ENCODE measurements at regions of chr9 and their contacts with region 1.

Region 1: GRCh38 chr9:21965401-21965951 is 28.7 kb downstream of the CDKN2A start:
- DNase-seq: peak; percentile 68
- H3K4me3 ChIP-seq: peak overlapping the region; percentile 34 to 46 (median 40)
- H3K27ac ChIP-seq: no peak overlapping the region
- H3K4me1 ChIP-seq: peaks cover 28% of the 10 kb centered on the region
- H3K27me3 ChIP-seq: peaks cover 57 to 84% of the 10 kb centered on the region in 2 experiments
- CTCF ChIP-seq: peak; percentile 75 to 80
- POLR2A ChIP-seq: no peak

Region 2: DNA sequence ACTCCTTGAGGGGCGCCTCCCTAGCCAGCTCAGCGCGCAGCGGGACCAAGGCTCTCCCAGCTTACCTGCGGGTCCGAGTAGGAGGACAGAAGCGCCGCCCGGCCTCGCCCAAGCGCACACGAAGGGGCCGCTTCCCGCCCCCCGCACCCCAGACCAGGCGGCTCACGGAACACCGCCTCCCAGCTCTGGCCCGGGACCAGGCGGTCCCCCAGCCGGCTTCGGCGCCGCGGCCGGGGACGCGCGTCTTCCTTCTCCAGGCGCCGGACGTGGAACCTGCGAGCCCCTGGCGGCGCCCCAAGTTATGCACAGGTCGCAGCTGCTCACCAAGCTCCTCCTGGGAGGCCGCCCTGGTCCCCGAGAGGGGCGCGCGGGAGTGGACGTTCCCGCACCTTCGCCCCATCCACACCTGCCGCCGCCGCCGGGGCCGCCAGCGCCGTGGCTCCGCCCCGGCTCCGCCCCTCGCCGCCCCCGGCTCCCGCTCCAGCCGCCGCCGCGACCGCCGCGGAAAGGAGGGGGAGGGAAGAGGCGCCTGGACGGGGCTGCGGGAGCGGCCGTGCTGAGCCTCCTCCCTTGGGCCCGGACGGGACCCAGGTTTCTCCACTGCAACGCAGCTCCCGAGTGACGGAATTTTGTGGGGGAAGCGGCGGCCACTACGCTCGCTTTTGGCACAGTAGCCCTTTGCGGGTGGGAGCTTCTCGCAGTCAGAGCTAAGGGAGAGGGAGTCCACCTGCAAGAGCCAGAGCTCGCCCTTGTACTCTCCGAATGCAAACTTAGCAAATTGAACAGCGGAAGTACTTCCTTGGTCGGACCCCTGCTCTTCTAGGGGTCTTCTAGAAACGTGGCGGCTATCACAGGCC is 405.8 kb before region 1 on chr9:
- CTCF ChIA-PET with region 1: no interaction called
- POLR2A ChIA-PET with region 1: no interaction called
- dilution Hi-C with region 1: no loop called
- intact Hi-C with region 1: no loop called
- DNase-seq: peak; percentile 68
- H3K4me3 ChIP-seq: peak overlapping the region; percentile 78 to 97 (median 92)
- H3K27ac ChIP-seq: peak overlapping the region; percentile 81
- H3K4me1 ChIP-seq: peaks cover 24% of the 10 kb centered on the region
- H3K27me3 ChIP-seq: no peaks in the 10 kb centered on the region
- CTCF ChIP-seq: peak in 1 of 2 donors; percentile 14
- POLR2A ChIP-seq: peak; percentile 49

Region 3: GRCh38 chr9:21831961-21832509 is 133.4 kb before region 1 on chr9:
- CTCF ChIA-PET with region 1: interaction called, 4 read pairs
- POLR2A ChIA-PET with region 1: no interaction called
- dilution Hi-C with region 1: no loop called
- intact Hi-C with region 1: loop called (anchors 1 kb)
- DNase-seq: peak; percentile 80
- H3K4me3 ChIP-seq: no peak overlapping the region
- H3K27ac ChIP-seq: peak overlapping the region; percentile 84
- H3K4me1 ChIP-seq: peaks cover 32% of the 10 kb centered on the region
- H3K27me3 ChIP-seq: no peaks in the 10 kb centered on the region
- CTCF ChIP-seq: no peak
- POLR2A ChIP-seq: no peak

Region 4: DNA sequence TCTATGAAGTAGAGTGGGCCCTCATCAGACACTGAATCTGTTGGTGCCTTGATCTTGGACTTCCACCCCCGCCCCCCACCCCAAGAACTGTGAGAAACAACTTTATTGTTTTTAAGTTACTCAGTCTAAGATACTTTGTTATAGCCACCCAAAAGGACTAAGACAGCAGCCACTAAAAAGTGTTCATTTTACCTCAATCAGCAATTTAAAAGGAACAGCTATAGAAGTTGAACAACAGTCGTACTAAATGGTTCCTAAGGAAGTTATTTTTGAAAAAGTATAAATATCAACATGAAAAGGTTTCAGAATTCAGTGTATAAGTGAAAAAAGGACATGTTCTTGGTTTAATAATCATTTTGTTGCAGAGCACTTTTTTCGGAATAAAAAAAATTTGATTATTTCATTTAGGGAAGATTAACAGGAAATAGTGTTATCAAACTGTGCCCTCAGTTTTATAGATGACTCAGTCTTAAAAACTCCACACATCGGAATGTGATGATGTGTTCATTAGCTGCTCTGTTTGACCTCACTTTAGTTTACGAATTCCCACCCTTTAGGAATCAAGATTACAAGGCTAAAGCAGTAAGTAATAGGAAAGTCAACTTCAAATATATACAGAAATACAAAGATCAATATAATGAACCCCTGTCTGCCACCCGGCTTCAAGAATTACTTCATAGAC is 91.8 kb before region 1 on chr9:
- CTCF ChIA-PET with region 1: interaction called, 3 read pairs
- POLR2A ChIA-PET with region 1: no interaction called
- dilution Hi-C with region 1: no loop called
- intact Hi-C with region 1: loop called (anchors 1 kb)
- DNase-seq: peak; percentile 85
- H3K4me3 ChIP-seq: no peak overlapping the region
- H3K27ac ChIP-seq: peak overlapping the region; percentile 82
- H3K4me1 ChIP-seq: peaks cover 45% of the 10 kb centered on the region
- H3K27me3 ChIP-seq: no peaks in the 10 kb centered on the region
- CTCF ChIP-seq: no peak
- POLR2A ChIP-seq: no peak

Region 5: DNA sequence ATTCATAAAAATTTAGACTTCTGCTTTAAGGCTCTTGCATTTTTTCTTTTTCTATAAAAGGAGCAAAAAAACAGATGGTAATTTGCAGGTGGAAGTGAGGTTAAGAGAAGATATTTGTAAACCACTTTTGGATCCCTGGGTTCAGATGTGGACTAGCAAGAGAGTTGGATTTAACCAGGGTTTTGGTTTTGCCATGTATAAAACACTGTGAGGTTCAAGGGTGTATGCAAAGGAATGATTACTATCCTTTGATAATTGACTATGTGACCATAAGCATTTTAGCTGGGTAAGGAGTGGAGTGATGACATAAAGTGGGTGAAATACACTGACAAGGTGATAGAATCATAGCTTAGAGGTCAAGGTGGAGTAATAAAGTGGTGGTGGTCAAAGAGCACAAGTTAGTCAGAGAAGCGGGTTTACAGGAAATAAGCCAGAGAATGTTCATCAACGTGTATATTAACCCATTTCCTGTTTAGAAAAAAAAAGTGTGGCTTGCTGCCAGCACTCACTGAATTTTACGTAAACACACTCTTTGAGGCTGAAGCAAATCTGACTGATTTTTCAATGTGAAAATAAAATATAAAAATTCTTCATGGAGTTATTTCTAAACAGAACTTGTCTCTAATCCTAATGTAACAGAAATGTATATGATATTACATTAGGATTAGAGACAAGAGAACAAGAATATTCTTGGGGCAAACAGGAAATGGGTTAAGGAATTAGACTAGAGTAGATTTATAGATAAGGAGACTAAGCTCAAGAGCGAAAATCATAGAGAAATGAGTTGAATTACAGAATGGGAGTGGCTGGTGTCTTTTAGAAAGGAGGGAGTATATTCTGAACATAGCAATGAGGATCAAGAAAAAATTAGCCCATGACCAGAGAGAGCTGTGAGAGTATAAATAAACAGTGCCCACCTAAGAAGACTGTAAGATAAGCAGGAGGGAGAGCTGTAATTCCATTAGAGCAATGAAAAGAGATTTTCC is 45.8 kb before region 1 on chr9:
- CTCF ChIA-PET with region 1: interaction called, 5 read pairs
- POLR2A ChIA-PET with region 1: no interaction called
- dilution Hi-C with region 1: no loop called
- intact Hi-C with region 1: loop called (anchors 1 kb)
- DNase-seq: peak; percentile 95
- H3K4me3 ChIP-seq: no peak overlapping the region
- H3K27ac ChIP-seq: peak overlapping the region; percentile 24
- H3K4me1 ChIP-seq: peaks cover 18% of the 10 kb centered on the region
- H3K27me3 ChIP-seq: no peaks in the 10 kb centered on the region
- CTCF ChIP-seq: no peak
- POLR2A ChIP-seq: no peak

Region 6: DNA sequence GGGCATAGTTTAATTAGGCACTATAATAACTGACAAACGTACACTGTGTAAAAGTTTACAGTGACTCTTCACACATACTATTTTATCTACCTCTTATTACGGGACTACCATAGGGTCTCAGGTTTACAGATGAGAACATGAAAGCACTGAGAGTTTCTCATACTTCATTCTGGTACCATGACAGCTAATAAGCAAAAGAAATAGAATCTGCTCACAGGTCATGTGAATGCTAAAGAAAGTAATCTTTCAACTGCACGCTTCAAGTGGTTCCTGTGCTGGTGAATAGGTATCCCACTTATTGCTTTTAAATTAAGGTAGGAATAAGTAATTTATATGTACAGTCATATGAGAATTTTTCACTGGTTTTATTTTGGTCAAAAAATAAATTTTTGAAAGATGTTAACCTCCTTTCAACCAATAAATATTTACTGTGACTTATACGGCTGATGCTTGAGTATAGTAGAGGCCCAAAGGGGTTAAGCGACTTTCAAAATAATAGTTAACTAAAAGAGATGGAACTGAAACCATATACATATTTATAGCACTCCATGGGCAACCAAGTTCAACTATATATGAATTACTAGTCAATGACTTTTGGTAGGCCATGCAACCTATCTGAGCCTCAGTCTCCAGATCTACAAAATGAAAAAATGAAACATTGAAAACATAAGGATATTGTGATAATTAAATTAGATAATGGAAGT is 20.6 kb after region 1 on chr9:
- CTCF ChIA-PET with region 1: interaction called, 10 read pairs
- POLR2A ChIA-PET with region 1: interaction called, 3 read pairs
- dilution Hi-C with region 1: no loop called
- intact Hi-C with region 1: no loop called
- DNase-seq: no peak
- H3K4me3 ChIP-seq: no peak overlapping the region
- H3K27ac ChIP-seq: no peak overlapping the region
- H3K4me1 ChIP-seq: peaks cover 18% of the 10 kb centered on the region
- H3K27me3 ChIP-seq: peaks cover 29 to 92% of the 10 kb centered on the region in 2 experiments
- CTCF ChIP-seq: no peak
- POLR2A ChIP-seq: no peak

Region 7: DNA sequence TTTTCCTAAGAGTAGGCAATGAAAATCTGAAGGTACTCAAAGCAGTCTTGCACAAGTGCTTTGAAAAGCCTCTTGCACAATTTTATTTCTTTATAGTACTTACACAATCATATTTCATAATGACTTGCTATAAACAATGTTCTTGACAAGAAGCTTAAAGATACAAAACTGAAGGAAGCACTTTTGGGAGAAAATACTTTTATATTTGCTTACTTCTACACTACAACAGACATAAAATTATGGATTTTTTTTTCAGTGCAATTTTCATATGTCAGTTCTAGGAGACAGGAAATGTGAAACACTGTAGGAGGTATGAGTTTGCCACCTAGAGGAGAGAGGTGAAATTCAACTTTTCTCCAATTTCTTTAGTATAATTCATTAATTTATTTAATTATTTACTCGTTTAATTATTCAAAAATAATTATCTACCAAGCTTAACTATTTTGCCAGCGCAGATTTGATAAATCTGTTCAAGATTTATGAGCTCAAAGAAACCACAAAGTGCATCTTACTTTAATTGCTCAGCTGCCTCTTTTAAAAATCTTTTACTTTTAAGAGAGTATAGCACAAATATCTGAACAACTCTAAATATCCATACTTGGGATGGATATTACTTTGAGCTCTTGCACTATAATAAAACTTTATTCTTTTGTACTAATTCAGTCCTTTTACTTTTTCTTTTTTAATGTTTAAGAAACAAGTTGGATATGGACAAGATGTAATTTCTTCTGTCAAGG is 72.6 kb after region 1 on chr9:
- CTCF ChIA-PET with region 1: interaction called, 6 read pairs
- POLR2A ChIA-PET with region 1: no interaction called
- dilution Hi-C with region 1: no loop called
- intact Hi-C with region 1: loop called (anchors 2 kb)
- DNase-seq: peak; percentile 51
- H3K4me3 ChIP-seq: no peak overlapping the region
- H3K27ac ChIP-seq: no peak overlapping the region
- H3K4me1 ChIP-seq: no peaks in the 10 kb centered on the region
- H3K27me3 ChIP-seq: no peaks in the 10 kb centered on the region
- CTCF ChIP-seq: peak; percentile 22 to 38
- POLR2A ChIP-seq: no peak

Region 8: GRCh38 chr9:22238809-22239684 is 273.6 kb after region 1 on chr9:
- CTCF ChIA-PET with region 1: interaction called, 12 read pairs
- POLR2A ChIA-PET with region 1: no interaction called
- dilution Hi-C with region 1: no loop called
- intact Hi-C with region 1: loop called (anchors 2 kb)
- DNase-seq: peak; percentile 65
- H3K4me3 ChIP-seq: no peak overlapping the region
- H3K27ac ChIP-seq: peak overlapping the region; percentile 42
- H3K4me1 ChIP-seq: peaks cover 23% of the 10 kb centered on the region
- H3K27me3 ChIP-seq: no peaks in the 10 kb centered on the region
- CTCF ChIP-seq: peak; percentile 19 to 41
- POLR2A ChIP-seq: no peak

Measured in endothelial cell of umbilical vein (primary cell).